CD4-positive, alpha-beta T cell (primary cell): ENCODE measurements at regions of chr2 and their contacts with region 1.

Region 1: GRCh38 chr2:69816923-69817542 is 12.4 kb upstream of the GMCL1 start:
- DNase-seq: peak; percentile 46 to 89 (median 63)
- ATAC-seq: peak; percentile 95
- H3K4me3 ChIP-seq: no peak overlapping the region
- H3K4me3 Mint-ChIP-seq: no peak overlapping the region
- H3K27ac ChIP-seq: no peak overlapping the region
- H3K27ac Mint-ChIP-seq: no peak overlapping the region
- H3K4me1 ChIP-seq: no peaks in the 10 kb centered on the region
- H3K4me1 Mint-ChIP-seq: peaks cover 5% of the 10 kb centered on the region
- H3K27me3 ChIP-seq: no peaks in the 10 kb centered on the region
- H3K27me3 Mint-ChIP-seq: no peaks in the 10 kb centered on the region
- CTCF ChIP-seq: peak; percentile 87

Region 2: DNA sequence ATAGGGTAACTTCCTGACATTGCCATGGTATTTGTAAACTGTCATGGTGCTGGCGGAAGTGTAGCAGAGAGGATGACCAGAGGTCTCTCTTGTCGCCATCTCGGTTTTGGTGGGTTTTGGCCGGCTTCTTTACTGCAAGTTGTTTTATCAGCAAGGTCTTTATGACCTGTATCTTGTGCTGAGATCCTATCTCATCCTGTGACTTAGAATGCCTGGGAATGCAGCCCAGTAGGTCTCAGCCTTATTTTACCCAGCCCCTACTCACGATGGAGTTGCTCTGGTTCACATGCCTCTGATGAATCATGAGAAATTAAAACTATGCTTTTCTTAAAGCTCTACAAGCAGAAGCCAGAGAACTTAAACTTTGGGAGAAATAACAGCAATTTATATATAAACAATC is 367.1 kb before region 1 on chr2:
- CTCF ChIA-PET with region 1: no interaction called
- POLR2A ChIA-PET with region 1: no interaction called
- intact Hi-C with region 1: loop called in 1 of 2 experiments (anchors 10 kb)
- DNase-seq: no peak
- ATAC-seq: no peak
- H3K4me3 ChIP-seq: no peak overlapping the region
- H3K4me3 Mint-ChIP-seq: no peak overlapping the region
- H3K27ac ChIP-seq: no peak overlapping the region
- H3K27ac Mint-ChIP-seq: no peak overlapping the region
- H3K4me1 ChIP-seq: no peaks in the 10 kb centered on the region
- H3K4me1 Mint-ChIP-seq: peaks cover 8% of the 10 kb centered on the region
- H3K27me3 ChIP-seq: no peaks in the 10 kb centered on the region
- H3K27me3 Mint-ChIP-seq: no peaks in the 10 kb centered on the region
- CTCF ChIP-seq: no peak

Region 3: GRCh38 chr2:69559442-69560146 is 257.4 kb before region 1 on chr2:
- CTCF ChIA-PET with region 1: interaction called, 13 read pairs
- POLR2A ChIA-PET with region 1: interaction called, 4 read pairs
- intact Hi-C with region 1: loop called (anchors 5 kb)
- DNase-seq: peak in 3 of 14 experiments; percentile 51 to 66 (median 65)
- ATAC-seq: peak; percentile 58
- H3K4me3 ChIP-seq: no peak overlapping the region
- H3K4me3 Mint-ChIP-seq: peak overlapping the region; percentile 30
- H3K27ac ChIP-seq: no peak overlapping the region
- H3K27ac Mint-ChIP-seq: peak overlapping the region; percentile 69
- H3K4me1 ChIP-seq: peaks cover 57% of the 10 kb centered on the region
- H3K4me1 Mint-ChIP-seq: peaks cover 91% of the 10 kb centered on the region
- H3K27me3 ChIP-seq: no peaks in the 10 kb centered on the region
- H3K27me3 Mint-ChIP-seq: no peaks in the 10 kb centered on the region
- CTCF ChIP-seq: peak; percentile 75

Region 4: GRCh38 chr2:69565431-69565839 is 251.6 kb before region 1 on chr2:
- CTCF ChIA-PET with region 1: interaction called, 13 read pairs
- POLR2A ChIA-PET with region 1: interaction called, 4 read pairs
- intact Hi-C with region 1: loop called (anchors 5 kb)
- DNase-seq: peak; percentile 41 to 82 (median 62)
- ATAC-seq: peak; percentile 77
- H3K4me3 ChIP-seq: no peak overlapping the region
- H3K4me3 Mint-ChIP-seq: peak overlapping the region; percentile 65
- H3K27ac ChIP-seq: no peak overlapping the region
- H3K27ac Mint-ChIP-seq: peak overlapping the region; percentile 82
- H3K4me1 ChIP-seq: peaks cover 59% of the 10 kb centered on the region
- H3K4me1 Mint-ChIP-seq: peaks cover 96% of the 10 kb centered on the region
- H3K27me3 ChIP-seq: no peaks in the 10 kb centered on the region
- H3K27me3 Mint-ChIP-seq: no peaks in the 10 kb centered on the region
- CTCF ChIP-seq: peak; percentile 94

Region 5: DNA sequence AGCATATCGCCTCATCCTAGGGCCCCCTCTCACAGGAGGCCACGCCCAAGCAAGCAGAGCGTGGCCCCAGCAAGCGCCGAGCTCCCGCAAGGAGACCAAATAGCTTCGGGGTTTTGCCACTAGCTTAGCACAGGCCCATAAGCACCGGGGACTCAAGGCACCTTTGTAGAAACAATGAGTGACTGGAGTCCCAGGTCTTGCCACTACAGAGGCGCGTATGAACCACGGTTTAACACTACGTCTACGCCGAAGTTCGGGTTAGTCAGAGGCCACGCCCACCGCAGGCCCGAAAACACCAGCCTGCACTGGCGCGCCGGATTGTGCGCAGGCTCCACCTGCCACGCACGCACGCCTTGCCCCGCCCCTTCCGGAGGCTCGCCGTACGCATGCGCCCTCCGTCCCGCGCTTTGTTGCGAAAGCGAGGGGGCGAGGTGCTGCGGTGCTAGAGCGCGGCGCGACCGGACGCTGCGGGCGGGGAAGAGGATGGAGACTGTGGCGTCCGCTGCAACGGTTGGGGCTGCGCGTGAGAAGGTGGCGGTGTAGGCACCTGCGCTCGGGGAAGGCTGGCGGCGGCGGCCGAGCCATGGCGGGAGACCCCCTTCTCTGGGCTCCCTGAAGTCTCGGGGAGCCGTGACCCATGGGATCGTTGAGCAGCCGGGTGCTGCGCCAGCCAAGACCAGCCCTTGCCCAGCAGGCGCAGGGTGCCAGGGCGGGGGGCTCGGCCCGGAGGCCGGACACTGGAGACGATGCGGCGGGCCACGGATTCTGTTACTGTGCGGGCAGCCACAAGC is 12.4 kb after region 1 on chr2 and contains the start of gene GMCL1:
- CTCF ChIA-PET with region 1: interaction called, 11 read pairs
- POLR2A ChIA-PET with region 1: interaction called, 9 read pairs
- intact Hi-C with region 1: no loop called
- DNase-seq: peak; percentile 97 to 100 (median 98)
- ATAC-seq: peak; percentile 93
- H3K4me3 ChIP-seq: peak within 1 kb of the TSS; percentile 74
- H3K4me3 Mint-ChIP-seq: peak within 1 kb of the TSS; percentile 99
- H3K27ac ChIP-seq: peak within 1 kb of the TSS; percentile 89 to 93
- H3K27ac Mint-ChIP-seq: peak within 1 kb of the TSS; percentile 99
- H3K4me1 ChIP-seq: peaks cover 33% of the 10 kb centered on the region
- H3K4me1 Mint-ChIP-seq: peaks cover 65% of the 10 kb centered on the region
- H3K27me3 ChIP-seq: no peaks in the 10 kb centered on the region
- H3K27me3 Mint-ChIP-seq: no peaks in the 10 kb centered on the region
- CTCF ChIP-seq: no peak
- total RNA-seq, gene GMCL1: 29.7 to 29.8 TPM